HepG2 (cell line): ENCODE measurements at regions of chr10 and their contacts with region 1.

Region 1: GRCh38 chr10:102399217-102400089 is 3.9 kb downstream of the NFKB2 start:
- DNase-seq: peak; percentile 68
- ATAC-seq: peak; percentile 65
- H3K4me3 ChIP-seq: peak overlapping the region; percentile 71 to 78 (median 73); a peak in 4 of 6 replicates
- H3K27ac ChIP-seq: peak overlapping the region; percentile 63
- H3K4me1 ChIP-seq: peaks cover 31% of the 10 kb centered on the region
- H3K27me3 ChIP-seq: no peaks in the 10 kb centered on the region; a peak in 1 of 5 replicates
- CTCF ChIP-seq: peak; percentile 99
- EP300 ChIP-seq: peak in 1 of 2 experiments; percentile 15; a peak in 1 of 4 replicates
- POLR2A ChIP-seq: peak in 1 of 2 experiments; percentile 62; a peak in 1 of 4 replicates
- RAD21 ChIP-seq: peak; percentile 94

Region 2: DNA sequence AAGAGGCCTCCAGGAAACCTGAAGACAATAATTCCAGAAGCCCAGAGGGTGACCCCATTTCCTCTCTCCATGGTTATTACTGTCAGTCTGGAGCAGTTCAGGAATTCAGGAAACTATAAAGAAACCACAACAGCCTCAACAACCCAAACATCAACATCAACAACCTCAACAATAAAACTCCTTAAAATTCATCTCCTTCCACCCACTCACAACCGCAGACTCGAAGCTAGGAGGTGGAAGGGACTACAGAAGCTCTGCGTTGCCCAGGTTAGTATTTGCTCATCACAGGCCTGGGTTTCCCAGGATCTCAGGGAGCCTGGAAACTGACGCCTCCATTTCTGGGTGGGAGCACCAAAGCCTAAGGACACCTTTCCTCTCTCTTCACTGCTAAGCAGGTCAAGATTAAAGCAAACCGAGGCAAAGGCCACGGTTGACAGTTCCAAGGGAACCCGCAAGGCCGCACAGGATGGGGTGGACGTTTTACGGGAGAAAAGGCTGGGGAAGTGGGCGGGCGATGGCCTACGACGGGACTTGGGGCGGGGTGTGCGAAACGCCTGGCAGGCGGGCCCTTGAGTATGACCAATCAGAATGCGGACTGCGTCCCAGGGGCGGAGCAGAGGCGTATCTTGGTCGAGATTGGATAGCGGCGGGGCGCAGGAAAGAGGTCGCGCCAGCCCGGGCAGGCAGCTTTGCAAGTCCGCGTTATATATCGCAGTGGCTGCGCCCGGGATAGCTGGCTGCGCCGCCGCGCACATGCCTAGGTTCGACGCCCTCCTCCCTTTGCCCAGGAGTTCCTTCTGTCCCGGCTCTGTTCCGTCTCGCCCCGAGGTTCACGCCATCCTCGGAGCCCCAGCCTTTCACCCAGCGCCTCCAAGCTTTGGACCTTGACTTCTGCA is 173.6 kb before region 1 on chr10 and contains the start of gene ELOVL3:
- CTCF ChIA-PET with region 1: interaction called, 12 read pairs
- POLR2A ChIA-PET with region 1: interaction called, 3 read pairs
- in situ Hi-C with region 1: no loop called
- intact Hi-C with region 1: loop called (anchors 2 kb)
- DNase-seq: peak; percentile 90
- ATAC-seq: peak; percentile 93
- H3K4me3 ChIP-seq: peak within 1 kb of the TSS; percentile 46 to 72 (median 59)
- H3K27ac ChIP-seq: no peak within 1 kb of the TSS
- H3K4me1 ChIP-seq: peaks cover 31% of the 10 kb centered on the region
- H3K27me3 ChIP-seq: peaks cover 0 to 31% of the 10 kb centered on the region in 2 experiments; a peak in 3 of 5 replicates
- CTCF ChIP-seq: no peak
- EP300 ChIP-seq: no peak
- POLR2A ChIP-seq: no peak; a peak in 1 of 4 replicates
- RAD21 ChIP-seq: peak; percentile 20
- total RNA-seq, gene ELOVL3: 0.24 and 0.69 TPM in 2 replicates

Region 3: DNA sequence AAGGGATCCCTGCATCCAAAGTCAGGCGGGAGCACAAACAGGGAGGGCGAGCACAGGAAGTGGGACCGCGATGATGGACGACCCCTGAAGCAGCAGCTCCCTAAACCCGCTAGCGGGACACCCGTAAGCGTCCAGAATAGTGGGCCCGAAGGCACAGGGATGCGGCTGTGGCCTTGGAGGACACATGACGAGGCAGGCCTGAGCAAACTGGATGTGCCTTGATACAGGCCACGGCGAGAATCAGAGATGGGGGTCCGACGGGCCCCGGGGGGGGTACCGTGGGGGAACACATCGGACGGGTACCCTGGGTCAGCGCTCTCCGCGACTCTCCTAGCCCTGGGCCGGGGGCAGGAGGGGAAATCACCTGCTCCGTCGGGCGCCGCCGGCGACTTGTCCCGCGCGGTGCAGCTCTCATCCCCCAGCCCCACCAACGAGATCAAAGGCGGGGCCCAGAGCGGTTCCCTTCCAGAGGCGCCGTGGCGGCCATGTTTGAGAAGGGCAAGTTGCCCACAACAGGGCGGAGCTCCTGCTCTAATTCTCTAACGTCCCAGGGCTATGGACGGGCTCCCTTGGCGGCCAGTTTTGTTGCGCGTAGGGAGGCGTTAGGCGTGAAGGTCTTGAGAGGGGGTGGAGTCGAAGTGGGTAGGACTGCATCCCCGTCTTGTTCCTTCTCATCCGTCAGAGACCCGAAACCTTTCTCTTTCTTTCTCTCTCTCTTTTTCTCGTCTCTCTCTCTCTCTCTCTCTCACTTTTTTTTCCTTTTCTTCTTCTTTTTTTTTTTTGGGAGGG is 32.9 kb after region 1 on chr10 and contains the start of gene CUEDC2:
- CTCF ChIA-PET with region 1: no interaction called
- POLR2A ChIA-PET with region 1: interaction called, 10 read pairs
- in situ Hi-C with region 1: no loop called
- intact Hi-C with region 1: no loop called
- DNase-seq: peak; percentile 89
- ATAC-seq: peak; percentile 78
- H3K4me3 ChIP-seq: peak within 1 kb of the TSS; percentile 74 to 92 (median 91)
- H3K27ac ChIP-seq: peak within 1 kb of the TSS; percentile 72
- H3K4me1 ChIP-seq: peaks cover 35% of the 10 kb centered on the region
- H3K27me3 ChIP-seq: no peaks in the 10 kb centered on the region; a peak in 1 of 5 replicates
- CTCF ChIP-seq: 0 out of 2 replicates have a peak, but pooled peaks have one; percentile 46
- EP300 ChIP-seq: 0 out of 4 replicates have a peak, but pooled peaks of 1 of the 2 experiments have one; percentile 17
- POLR2A ChIP-seq: peak; percentile 67 to 81
- RAD21 ChIP-seq: 0 out of 2 replicates have a peak, but pooled peaks have one; percentile 40
- total RNA-seq, gene CUEDC2: 13.0 and 13.1 TPM in 2 replicates

Region 4: GRCh38 chr10:102476466-102477141 is 77.2 kb after region 1 on chr10:
- CTCF ChIA-PET with region 1: interaction called, 11 read pairs
- POLR2A ChIA-PET with region 1: no interaction called
- in situ Hi-C with region 1: loop called (anchors 10 kb)
- intact Hi-C with region 1: loop called (anchors 1 kb)
- DNase-seq: no peak
- ATAC-seq: no peak
- H3K4me3 ChIP-seq: no peak overlapping the region
- H3K27ac ChIP-seq: no peak overlapping the region
- H3K4me1 ChIP-seq: no peaks in the 10 kb centered on the region
- H3K27me3 ChIP-seq: no peaks in the 10 kb centered on the region
- CTCF ChIP-seq: no peak
- EP300 ChIP-seq: no peak
- POLR2A ChIP-seq: no peak
- RAD21 ChIP-seq: no peak